ENCODE measurements at regions of chr19 and their contacts with region 1.

Region 1: DNA sequence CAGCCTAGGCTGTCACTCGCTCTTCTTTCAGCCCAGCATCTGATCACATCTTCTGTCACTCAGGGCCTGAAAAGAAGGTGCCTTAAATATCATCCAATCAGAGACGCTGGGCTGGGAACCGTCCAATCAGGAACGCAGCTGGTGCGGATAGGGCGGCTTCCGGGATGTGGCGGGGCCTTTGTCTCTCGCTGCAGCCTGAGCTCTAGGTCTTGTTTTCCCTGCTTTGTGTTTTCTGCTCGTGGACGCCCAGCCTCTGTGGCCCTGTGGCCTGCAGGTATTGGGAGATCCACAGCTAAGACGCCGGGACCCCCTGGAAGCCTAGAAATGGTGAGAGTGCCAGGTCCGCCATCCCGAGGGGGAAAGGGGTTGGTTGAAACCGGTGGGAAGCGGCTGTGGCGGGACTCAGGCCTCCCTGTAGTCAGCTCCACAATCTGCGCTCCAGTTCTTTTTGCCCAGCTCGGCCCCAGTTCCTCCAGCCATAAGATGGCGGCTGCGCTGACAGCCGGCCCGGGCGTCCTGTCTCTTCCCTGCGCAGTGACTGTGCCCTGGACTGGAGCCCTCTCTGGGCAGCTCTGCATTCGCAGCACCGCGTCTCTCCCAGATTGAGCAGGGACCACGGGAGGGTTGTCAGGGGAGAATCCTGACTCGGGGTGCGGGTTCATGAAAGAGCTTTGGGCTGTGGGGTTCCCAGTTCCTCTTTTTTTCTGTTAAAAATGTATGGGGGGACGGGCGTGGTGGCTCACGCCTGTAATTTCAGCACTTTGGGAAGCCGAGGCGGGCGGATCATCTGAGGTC is at the start of gene ZNF85:
- DNase-seq: peak; percentile 94
- H3K4me3 ChIP-seq: peak within 1 kb of the TSS; percentile 66 to 86 (median 78)
- H3K27ac ChIP-seq: peak within 1 kb of the TSS; percentile 74
- H3K4me1 ChIP-seq: no peaks in the 10 kb centered on the region
- H3K27me3 ChIP-seq: no peaks in the 10 kb centered on the region
- CTCF ChIP-seq: no peak
- POLR2A ChIP-seq: peak; percentile 70
- total RNA-seq, gene ZNF85: 9.2 and 9.5 TPM in 2 replicates

Region 2: GRCh38 chr19:20776083-20777076 is 146.9 kb before region 1 on chr19 and contains the start of gene ZNF66:
- CTCF ChIA-PET with region 1: no interaction called
- POLR2A ChIA-PET with region 1: interaction called, 4 read pairs
- dilution Hi-C with region 1: no loop called
- intact Hi-C with region 1: loop called (anchors 2 kb)
- DNase-seq: peak; percentile 96
- H3K4me3 ChIP-seq: peak within 1 kb of the TSS; percentile 20 to 78 (median 70)
- H3K27ac ChIP-seq: peak within 1 kb of the TSS; percentile 70
- H3K4me1 ChIP-seq: peaks cover 2% of the 10 kb centered on the region
- H3K27me3 ChIP-seq: no peaks in the 10 kb centered on the region
- CTCF ChIP-seq: no peak
- POLR2A ChIP-seq: peak; percentile 53
- total RNA-seq, gene ZNF66: 4.0 and 4.5 TPM in 2 replicates

Region 3: DNA sequence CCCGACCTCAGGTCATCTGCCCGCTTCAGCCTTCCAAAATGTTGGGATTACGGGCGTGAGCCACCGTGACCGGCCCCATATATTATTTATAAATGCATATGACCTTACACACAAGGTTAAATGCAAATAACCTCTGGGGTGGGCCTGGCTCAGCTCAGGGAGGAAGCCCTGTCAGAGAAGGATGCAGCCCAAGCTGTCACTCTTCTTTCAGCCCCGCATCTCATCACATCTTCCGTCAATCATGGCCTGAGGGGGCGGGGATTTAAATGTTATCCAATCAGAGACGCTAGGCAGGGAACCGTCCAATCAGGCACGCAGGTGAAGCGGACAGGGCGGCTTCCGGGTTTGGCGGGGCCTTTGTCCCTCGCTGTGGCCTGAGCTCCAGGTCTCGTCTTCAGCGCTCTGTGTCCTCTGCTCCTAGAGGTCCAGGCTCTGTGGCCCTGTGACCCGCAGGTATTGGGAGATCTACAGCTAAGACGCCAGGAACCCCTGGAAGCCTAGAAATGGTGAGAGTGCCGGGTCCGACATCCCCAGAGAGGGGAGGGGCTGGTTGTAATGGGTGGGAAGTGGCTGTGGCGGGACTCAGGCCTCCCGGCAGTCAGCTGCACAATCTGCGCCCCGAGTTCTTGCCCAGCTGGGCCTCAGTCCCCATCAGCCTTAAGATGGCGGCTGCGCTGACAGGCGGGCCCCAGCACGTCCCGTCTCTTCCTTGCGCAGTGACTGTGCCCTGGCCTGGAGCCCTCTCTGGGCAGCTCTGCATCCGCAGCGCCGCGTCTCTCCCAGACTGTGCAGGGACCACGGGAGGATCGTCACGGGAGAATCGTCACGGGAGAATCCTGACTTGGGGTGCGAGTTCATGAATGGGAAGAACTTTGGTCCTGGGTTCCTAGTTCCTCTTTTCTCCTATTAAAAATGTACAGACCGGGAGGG is 97.3 kb after region 1 on chr19 and contains the start of gene ZNF430:
- CTCF ChIA-PET with region 1: no interaction called
- POLR2A ChIA-PET with region 1: interaction called, 5 read pairs
- dilution Hi-C with region 1: no loop called
- intact Hi-C with region 1: loop called (anchors 2 kb)
- DNase-seq: peak; percentile 93
- H3K4me3 ChIP-seq: peak within 1 kb of the TSS; percentile 86 to 89 (median 87)
- H3K27ac ChIP-seq: peak within 1 kb of the TSS; percentile 75
- H3K4me1 ChIP-seq: peaks cover 3% of the 10 kb centered on the region
- H3K27me3 ChIP-seq: no peaks in the 10 kb centered on the region
- CTCF ChIP-seq: no peak
- POLR2A ChIP-seq: peak; percentile 48
- total RNA-seq, gene ZNF430: 11.1 and 13.4 TPM in 2 replicates

Region 4: GRCh38 chr19:21851596-21852345 is 928.5 kb after region 1 on chr19:
- CTCF ChIA-PET with region 1: no interaction called
- POLR2A ChIA-PET with region 1: no interaction called
- dilution Hi-C with region 1: no loop called
- intact Hi-C with region 1: loop called (anchors 10 kb)
- DNase-seq: peak; percentile 95
- H3K4me3 ChIP-seq: peak overlapping the region; percentile 68 to 82 (median 82)
- H3K27ac ChIP-seq: peak overlapping the region; percentile 84
- H3K4me1 ChIP-seq: peaks cover 6% of the 10 kb centered on the region
- H3K27me3 ChIP-seq: no peaks in the 10 kb centered on the region
- CTCF ChIP-seq: no peak
- POLR2A ChIP-seq: no peak